ENCODE measurements at regions of chr12 and their contacts with region 1.

Region 1: DNA sequence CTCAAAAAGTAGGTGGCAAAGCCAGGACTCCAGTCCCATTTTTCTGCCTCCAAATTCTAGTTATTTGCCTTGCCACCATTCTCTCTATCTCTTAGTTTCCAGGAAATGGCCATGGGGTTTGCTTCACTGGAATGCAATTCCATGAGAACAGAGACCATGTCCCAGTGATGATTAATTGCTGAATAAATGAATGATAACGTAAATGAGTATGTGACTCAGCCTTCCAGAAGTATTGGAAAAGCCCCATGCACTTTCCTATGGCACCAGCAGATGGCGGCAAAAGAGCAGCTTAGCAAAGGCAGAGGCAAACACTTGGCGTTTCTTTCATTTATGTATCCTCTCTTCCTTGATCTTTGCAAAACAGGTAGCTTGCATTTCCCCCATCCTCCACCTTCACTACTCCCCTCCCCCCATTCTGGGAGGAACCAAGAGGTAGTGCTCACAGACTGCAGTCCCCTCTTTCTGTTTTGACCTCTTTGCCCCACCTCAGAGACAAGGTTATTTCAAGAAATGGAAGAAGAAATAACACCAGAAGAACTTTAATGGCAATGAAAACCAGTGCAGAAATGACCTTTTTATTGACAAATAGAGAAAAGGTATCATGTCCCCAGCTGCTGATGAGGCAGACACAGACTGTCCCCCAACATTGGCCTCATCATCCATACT is 21.3 kb downstream of the TBX3 start:
- DNase-seq: peak; percentile 91
- ATAC-seq: peak; percentile 89
- H3K4me3 ChIP-seq: no peak overlapping the region
- H3K27ac ChIP-seq: no peak overlapping the region
- H3K4me1 ChIP-seq: peaks cover under 1% of the 10 kb centered on the region; the same call in 1 of the 2 replicates
- H3K27me3 ChIP-seq: no peaks in the 10 kb centered on the region
- CTCF ChIP-seq: peak; percentile 98
- POLR2A ChIP-seq: peak; percentile 69
- RAD21 ChIP-seq: peak; percentile 100

Region 2: DNA sequence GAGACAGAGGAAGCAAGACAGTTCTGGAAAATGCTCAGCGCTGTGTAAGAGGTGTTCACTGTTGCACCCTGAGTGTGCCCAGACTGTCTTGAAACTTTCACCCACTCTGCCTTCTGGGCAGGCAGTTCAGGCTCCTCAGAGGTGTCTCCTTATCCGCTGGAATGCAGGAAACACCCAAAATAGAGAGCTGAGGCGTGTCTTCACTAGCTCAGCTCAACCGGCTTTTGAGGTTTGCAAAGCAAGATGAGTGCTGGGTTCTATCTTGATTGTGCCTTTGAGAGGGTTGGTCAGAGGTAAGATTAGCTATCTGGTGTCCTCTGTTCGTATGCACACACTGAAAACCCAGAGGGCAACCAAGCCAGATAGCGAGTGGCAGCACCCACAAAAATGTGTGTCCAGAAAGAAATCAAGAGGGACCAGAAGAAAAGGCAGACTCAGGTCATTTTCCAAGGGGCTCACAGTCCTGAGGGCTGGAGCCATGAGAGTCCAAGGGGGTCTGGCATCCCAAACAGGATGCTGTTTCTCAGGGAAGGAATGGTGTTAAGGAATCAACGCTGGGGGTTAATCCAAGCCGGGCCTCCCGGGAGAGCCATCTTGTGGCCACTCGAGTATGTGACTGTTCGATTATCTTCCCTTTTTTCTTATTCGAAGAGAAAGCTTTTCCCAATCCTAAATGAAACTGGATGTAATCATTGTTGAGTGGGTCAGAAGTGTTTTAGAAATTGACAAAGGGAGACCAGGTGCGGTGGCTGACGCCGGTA is 25.7 kb before region 1 on chr12:
- CTCF ChIA-PET with region 1: no interaction called
- POLR2A ChIA-PET with region 1: no interaction called
- dilution Hi-C with region 1: no loop called
- in situ Hi-C with region 1: no loop called
- intact Hi-C with region 1: no loop called
- DNase-seq: peak; percentile 19
- ATAC-seq: peak; percentile 84
- H3K4me3 ChIP-seq: no peak overlapping the region
- H3K27ac ChIP-seq: no peak overlapping the region
- H3K4me1 ChIP-seq: no peaks in the 10 kb centered on the region
- H3K27me3 ChIP-seq: peaks cover 1% of the 10 kb centered on the region; the same call in 1 of the 2 replicates
- CTCF ChIP-seq: peak; percentile 58
- POLR2A ChIP-seq: no peak
- RAD21 ChIP-seq: peak; percentile 41; the same call in 1 of the 2 replicates

Region 3: GRCh38 chr12:114868995-114869834 is 206.6 kb after region 1 on chr12:
- CTCF ChIA-PET with region 1: no interaction called
- POLR2A ChIA-PET with region 1: no interaction called
- dilution Hi-C with region 1: no loop called
- in situ Hi-C with region 1: no loop called
- intact Hi-C with region 1: no loop called
- DNase-seq: peak; percentile 85
- ATAC-seq: peak; percentile 87
- H3K4me3 ChIP-seq: no peak overlapping the region
- H3K27ac ChIP-seq: peak overlapping the region; percentile 61; the same call in 1 of the 2 replicates
- H3K4me1 ChIP-seq: peaks cover 5% of the 10 kb centered on the region
- H3K27me3 ChIP-seq: no peaks in the 10 kb centered on the region
- CTCF ChIP-seq: no peak
- POLR2A ChIP-seq: no peak
- RAD21 ChIP-seq: no peak

Region 4: DNA sequence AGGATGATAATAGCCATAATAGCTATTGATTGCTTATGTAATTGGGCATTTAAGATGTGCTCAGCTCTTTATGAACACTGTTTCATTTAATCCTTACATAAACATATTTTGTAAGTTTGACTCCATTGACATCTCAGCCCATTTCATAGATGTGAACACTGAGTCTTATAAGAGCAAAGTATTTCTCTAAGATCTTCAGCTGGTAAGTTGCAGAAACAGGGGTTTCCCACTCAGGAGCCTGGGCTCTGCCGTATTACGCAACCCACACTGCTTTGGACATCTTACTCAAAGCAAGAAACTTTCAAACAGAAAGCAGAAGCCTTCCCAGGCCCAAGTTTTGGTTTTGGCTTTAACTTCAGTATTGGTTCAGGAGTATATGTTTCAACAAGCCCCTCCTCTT is 909.8 kb after region 1 on chr12:
- CTCF ChIA-PET with region 1: no interaction called
- POLR2A ChIA-PET with region 1: no interaction called
- dilution Hi-C with region 1: no loop called
- in situ Hi-C with region 1: no loop called
- intact Hi-C with region 1: loop called (anchors 10 kb)
- DNase-seq: peak; percentile 12
- ATAC-seq: no peak
- H3K4me3 ChIP-seq: no peak overlapping the region
- H3K27ac ChIP-seq: no peak overlapping the region
- H3K4me1 ChIP-seq: no peaks in the 10 kb centered on the region
- H3K27me3 ChIP-seq: peaks cover 4% of the 10 kb centered on the region
- CTCF ChIP-seq: no peak
- POLR2A ChIP-seq: no peak
- RAD21 ChIP-seq: no peak

Region 5: GRCh38 chr12:115632308-115632707 is 969.7 kb after region 1 on chr12:
- CTCF ChIA-PET with region 1: no interaction called
- POLR2A ChIA-PET with region 1: no interaction called
- dilution Hi-C with region 1: no loop called
- in situ Hi-C with region 1: loop called (anchors 10 kb)
- intact Hi-C with region 1: loop called (anchors 2 kb)
- DNase-seq: peak; percentile 28
- ATAC-seq: no peak
- H3K4me3 ChIP-seq: no peak overlapping the region
- H3K27ac ChIP-seq: no peak overlapping the region
- H3K4me1 ChIP-seq: no peaks in the 10 kb centered on the region
- H3K27me3 ChIP-seq: no peaks in the 10 kb centered on the region; the same call in 1 of the 2 replicates
- CTCF ChIP-seq: peak; percentile 36
- POLR2A ChIP-seq: no peak
- RAD21 ChIP-seq: peak; percentile 52

Region 6: GRCh38 chr12:115871714-115872113 is 1209.1 kb after region 1 on chr12:
- CTCF ChIA-PET with region 1: interaction called, 3 read pairs
- POLR2A ChIA-PET with region 1: no interaction called
- dilution Hi-C with region 1: no loop called
- in situ Hi-C with region 1: no loop called
- intact Hi-C with region 1: loop called (anchors 5 kb)
- DNase-seq: peak; percentile 21
- ATAC-seq: peak; percentile 85
- H3K4me3 ChIP-seq: no peak overlapping the region
- H3K27ac ChIP-seq: no peak overlapping the region
- H3K4me1 ChIP-seq: no peaks in the 10 kb centered on the region
- H3K27me3 ChIP-seq: no peaks in the 10 kb centered on the region; the same call in 1 of the 2 replicates
- CTCF ChIP-seq: peak; percentile 33; the same call in 1 of the 2 replicates
- POLR2A ChIP-seq: no peak
- RAD21 ChIP-seq: no peak

Region 7: GRCh38 chr12:115916910-115917668 is 1254.4 kb after region 1 on chr12:
- CTCF ChIA-PET with region 1: no interaction called
- POLR2A ChIA-PET with region 1: no interaction called
- dilution Hi-C with region 1: no loop called
- in situ Hi-C with region 1: loop called (anchors 5 kb)
- intact Hi-C with region 1: loop called (anchors 1 kb)
- DNase-seq: no peak
- ATAC-seq: peak; percentile 78
- H3K4me3 ChIP-seq: no peak overlapping the region
- H3K27ac ChIP-seq: no peak overlapping the region
- H3K4me1 ChIP-seq: peaks cover 3% of the 10 kb centered on the region
- H3K27me3 ChIP-seq: peaks cover 28% of the 10 kb centered on the region
- CTCF ChIP-seq: peak; percentile 83
- POLR2A ChIP-seq: no peak
- RAD21 ChIP-seq: peak; percentile 88

Region 8: GRCh38 chr12:115946867-115947696 is 1284.4 kb after region 1 on chr12:
- CTCF ChIA-PET with region 1: no interaction called
- POLR2A ChIA-PET with region 1: no interaction called
- dilution Hi-C with region 1: no loop called
- in situ Hi-C with region 1: no loop called
- intact Hi-C with region 1: loop called (anchors 1 kb)
- DNase-seq: peak; percentile 10
- ATAC-seq: peak; percentile 42; the same call in 1 of the 2 replicates
- H3K4me3 ChIP-seq: no peak overlapping the region
- H3K27ac ChIP-seq: no peak overlapping the region
- H3K4me1 ChIP-seq: no peaks in the 10 kb centered on the region; the same call in 1 of the 2 replicates
- H3K27me3 ChIP-seq: no peaks in the 10 kb centered on the region
- CTCF ChIP-seq: peak; percentile 58
- POLR2A ChIP-seq: no peak
- RAD21 ChIP-seq: peak; percentile 45